T-cell (primary cell): ENCODE measurements at regions of chr2 and their contacts with region 1.

Region 1: GRCh38 chr2:86087936-86088850 is 17.5 kb downstream of the POLR1A start:
- DNase-seq: no peak
- ATAC-seq: no peak
- H3K4me3 ChIP-seq: no peak overlapping the region
- H3K4me3 Mint-ChIP-seq: no peak overlapping the region
- H3K27ac ChIP-seq: no peak overlapping the region
- H3K27ac Mint-ChIP-seq: no peak overlapping the region
- H3K4me1 ChIP-seq: no peaks in the 10 kb centered on the region
- H3K4me1 Mint-ChIP-seq: no peaks in the 10 kb centered on the region
- H3K27me3 ChIP-seq: no peaks in the 10 kb centered on the region
- H3K27me3 Mint-ChIP-seq: no peaks in the 10 kb centered on the region

Region 2: DNA sequence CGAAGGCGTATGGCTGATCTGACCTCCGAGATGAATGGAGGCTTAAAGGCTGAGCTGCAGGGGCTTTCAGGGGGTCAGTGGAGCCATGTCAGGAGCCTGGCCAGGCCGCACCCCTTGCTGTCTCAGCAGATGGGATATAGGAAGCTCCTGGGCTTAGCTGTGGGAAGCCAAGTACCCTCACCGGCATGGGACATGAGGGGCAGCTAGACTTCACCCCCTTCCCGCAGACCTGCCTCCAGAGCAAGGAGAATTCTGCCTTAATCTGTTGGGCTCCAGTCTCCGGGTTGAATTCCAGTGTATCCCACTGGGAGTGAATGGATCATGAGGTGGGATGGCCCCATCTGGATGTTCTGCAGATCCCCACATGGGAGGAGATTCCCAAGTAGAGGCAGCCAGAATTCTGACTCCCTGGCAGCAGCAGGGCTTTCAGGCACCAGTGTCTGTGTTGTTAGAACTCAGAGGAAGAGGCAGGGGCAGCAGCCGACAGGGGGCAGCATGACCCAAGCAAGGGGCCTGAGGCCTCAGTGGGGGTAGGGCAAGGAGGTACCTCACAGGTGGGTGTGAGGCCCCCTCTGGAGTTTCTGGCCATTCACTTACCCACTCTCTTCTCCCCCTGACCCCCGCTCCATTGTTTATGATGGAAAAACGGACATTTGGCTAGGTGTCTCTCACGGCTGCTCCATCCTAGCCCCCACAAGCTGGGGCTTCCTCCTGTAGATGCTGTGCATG is 697.1 kb before region 1 on chr2:
- CTCF ChIA-PET with region 1: interaction called in 1 of 2 experiments, 16 read pairs
- POLR2A ChIA-PET with region 1: no interaction called
- DNase-seq: peak; percentile 33 to 80 (median 64)
- ATAC-seq: peak; percentile 65 to 83 (median 72)
- H3K4me3 ChIP-seq: no peak overlapping the region
- H3K4me3 Mint-ChIP-seq: no peak overlapping the region
- H3K27ac ChIP-seq: no peak overlapping the region
- H3K27ac Mint-ChIP-seq: peak overlapping the region in 1 of 2 donors; percentile 44
- H3K4me1 ChIP-seq: peaks cover 2 to 15% of the 10 kb centered on the region in 2 experiments
- H3K4me1 Mint-ChIP-seq: peaks cover 6 to 21% (median 17%) of the 10 kb centered on the region in 3 donors
- H3K27me3 ChIP-seq: no peaks in the 10 kb centered on the region
- H3K27me3 Mint-ChIP-seq: no peaks in the 10 kb centered on the region

Region 3: GRCh38 chr2:85999061-85999831 is 88.9 kb before region 1 on chr2:
- CTCF ChIA-PET with region 1: no interaction called
- POLR2A ChIA-PET with region 1: no interaction called
- DNase-seq: peak; percentile 6 to 61 (median 33)
- ATAC-seq: peak; percentile 77 to 97 (median 90)
- H3K4me3 ChIP-seq: no peak overlapping the region
- H3K4me3 Mint-ChIP-seq: peak overlapping the region; percentile 36 to 53 (median 42)
- H3K27ac ChIP-seq: peak overlapping the region; percentile 71
- H3K27ac Mint-ChIP-seq: peak overlapping the region; percentile 92 to 96
- H3K4me1 ChIP-seq: peaks cover 32 to 70% of the 10 kb centered on the region in 2 experiments
- H3K4me1 Mint-ChIP-seq: peaks cover 44 to 69% (median 53%) of the 10 kb centered on the region in 3 donors
- H3K27me3 ChIP-seq: no peaks in the 10 kb centered on the region
- H3K27me3 Mint-ChIP-seq: no peaks in the 10 kb centered on the region

Region 4: DNA sequence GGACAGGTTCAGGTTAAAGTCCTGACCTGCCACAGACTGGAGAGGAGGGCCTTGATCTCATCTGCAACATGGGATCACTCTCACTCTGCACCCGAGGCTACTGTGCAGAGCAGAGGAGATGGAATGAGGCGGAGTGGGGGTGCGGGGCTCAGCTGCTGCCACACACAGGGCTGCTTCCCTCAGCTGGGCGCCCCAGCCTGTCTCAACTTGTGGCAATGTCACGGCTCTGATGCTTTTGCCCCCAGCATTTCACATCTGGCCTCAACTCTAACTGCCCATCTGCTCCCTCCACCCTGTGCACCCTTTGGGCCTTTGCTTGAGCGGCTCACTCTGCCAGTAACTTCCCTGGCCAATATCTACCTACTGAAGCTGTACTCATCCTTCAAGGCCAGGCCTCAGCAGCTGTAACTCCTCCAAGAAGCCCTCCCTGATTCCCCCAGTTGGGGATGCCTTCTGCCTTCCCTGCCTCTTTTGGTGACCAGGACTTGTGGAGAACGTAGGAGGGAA is 52.8 kb before region 1 on chr2:
- CTCF ChIA-PET with region 1: no interaction called
- POLR2A ChIA-PET with region 1: no interaction called
- DNase-seq: peak in 4 of 35 experiments; percentile 23 to 33 (median 32)
- ATAC-seq: no peak
- H3K4me3 ChIP-seq: no peak overlapping the region
- H3K4me3 Mint-ChIP-seq: peak overlapping the region; percentile 67 to 78 (median 74)
- H3K27ac ChIP-seq: peak overlapping the region; percentile 96
- H3K27ac Mint-ChIP-seq: peak overlapping the region; percentile 99
- H3K4me1 ChIP-seq: peaks cover 61 to 78% of the 10 kb centered on the region in 2 experiments
- H3K4me1 Mint-ChIP-seq: peaks cover 78 to 89% (median 84%) of the 10 kb centered on the region in 3 donors
- H3K27me3 ChIP-seq: no peaks in the 10 kb centered on the region
- H3K27me3 Mint-ChIP-seq: no peaks in the 10 kb centered on the region

Region 5: DNA sequence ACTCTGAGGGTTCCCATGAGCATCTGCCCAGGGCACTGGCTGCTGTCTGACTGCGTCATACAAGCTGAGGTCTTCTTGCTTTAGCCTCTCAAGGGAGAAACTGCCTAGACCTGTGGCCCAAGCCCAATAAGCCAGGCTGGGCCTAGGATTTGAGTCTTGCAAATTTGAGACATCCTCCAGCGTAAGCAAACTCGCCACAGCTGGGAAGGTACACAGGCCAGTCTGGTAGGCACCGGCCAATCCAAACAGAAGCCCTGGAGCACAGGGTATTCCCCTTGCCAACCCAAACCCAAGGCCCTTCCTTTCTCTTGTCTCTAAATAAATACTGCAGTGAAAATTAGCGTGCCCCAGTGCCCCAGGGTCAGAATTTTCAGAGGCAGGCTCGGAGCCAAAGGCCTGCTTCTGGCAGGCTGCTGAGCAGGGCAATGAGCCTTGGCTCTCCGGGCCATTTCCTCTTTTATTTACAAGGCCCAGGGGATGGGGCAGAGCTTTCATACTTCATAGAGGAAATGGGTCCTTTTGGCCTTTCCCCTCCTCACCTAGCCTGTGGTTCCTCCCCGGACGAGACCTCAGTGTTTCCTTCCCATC is 15.8 kb before region 1 on chr2:
- CTCF ChIA-PET with region 1: no interaction called
- POLR2A ChIA-PET with region 1: no interaction called
- DNase-seq: no peak
- ATAC-seq: no peak
- H3K4me3 ChIP-seq: no peak overlapping the region
- H3K4me3 Mint-ChIP-seq: no peak overlapping the region
- H3K27ac ChIP-seq: no peak overlapping the region
- H3K27ac Mint-ChIP-seq: peak overlapping the region; percentile 65 to 68
- H3K4me1 ChIP-seq: peaks cover 6 to 19% of the 10 kb centered on the region in 2 experiments
- H3K4me1 Mint-ChIP-seq: peaks cover 16 to 27% (median 21%) of the 10 kb centered on the region in 3 donors
- H3K27me3 ChIP-seq: no peaks in the 10 kb centered on the region
- H3K27me3 Mint-ChIP-seq: no peaks in the 10 kb centered on the region